CD4-positive, alpha-beta memory T cell (primary cell): ENCODE measurements at regions of chr19 and their contacts with region 1.

Region 1: DNA sequence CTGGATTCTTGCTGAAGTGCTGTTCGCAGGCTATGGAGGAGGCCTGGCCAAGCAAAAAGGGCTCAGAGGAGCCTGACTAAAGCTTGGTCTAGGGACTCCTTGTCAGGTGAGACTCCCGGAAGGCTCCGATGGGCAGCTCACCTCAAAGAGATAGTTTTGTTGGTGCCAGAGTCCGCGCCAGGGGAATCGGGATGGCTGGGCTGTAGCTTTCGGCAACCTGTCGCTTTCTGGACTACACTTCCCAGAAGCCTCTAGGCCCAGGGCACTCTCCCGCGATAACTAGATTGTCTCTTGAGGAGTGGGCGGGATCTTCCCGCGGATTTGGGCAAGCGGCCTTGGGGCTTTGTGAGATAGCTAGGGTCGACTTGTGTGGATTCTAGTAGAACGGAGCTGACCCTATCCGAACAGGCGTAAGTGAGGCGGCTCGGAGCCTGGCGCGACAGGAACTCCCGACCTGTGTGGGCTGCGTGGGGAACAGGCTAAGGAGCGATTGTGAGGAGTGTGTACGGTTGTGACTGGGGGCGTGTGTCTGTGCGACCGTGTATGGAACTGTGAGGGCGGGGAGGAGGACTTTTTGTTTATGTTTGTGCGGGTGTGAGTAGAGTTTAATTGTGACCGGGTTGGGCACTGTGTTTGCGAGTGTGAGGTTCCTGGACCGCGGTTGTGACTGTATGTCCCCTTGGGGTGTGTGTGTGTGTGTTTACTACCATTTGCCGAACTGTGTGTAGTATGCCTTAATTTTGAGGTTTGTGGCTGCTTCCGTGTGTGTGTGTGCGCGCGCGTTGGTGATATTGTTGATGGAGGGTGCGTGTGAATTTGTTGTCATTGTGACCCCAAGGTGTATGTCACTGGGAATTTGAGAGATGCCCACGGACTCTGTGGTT is at the start of gene ZNF345:
- DNase-seq: peak; percentile 87 to 94 (median 89)
- H3K4me3 ChIP-seq: peak within 1 kb of the TSS; percentile 88 to 97
- H3K4me3 Mint-ChIP-seq: no peak within 1 kb of the TSS
- H3K27ac ChIP-seq: peak within 1 kb of the TSS; percentile 86
- H3K27ac Mint-ChIP-seq: no peak within 1 kb of the TSS
- H3K4me1 ChIP-seq: peaks cover 29% of the 10 kb centered on the region
- H3K4me1 Mint-ChIP-seq: peaks cover 5 to 24% (median 11%) of the 10 kb centered on the region in 4 donors
- H3K27me3 ChIP-seq: no peaks in the 10 kb centered on the region
- H3K27me3 Mint-ChIP-seq: no peaks in the 10 kb centered on the region
- total RNA-seq, gene ZNF345: 17.6 to 18.0 TPM

Region 2: DNA sequence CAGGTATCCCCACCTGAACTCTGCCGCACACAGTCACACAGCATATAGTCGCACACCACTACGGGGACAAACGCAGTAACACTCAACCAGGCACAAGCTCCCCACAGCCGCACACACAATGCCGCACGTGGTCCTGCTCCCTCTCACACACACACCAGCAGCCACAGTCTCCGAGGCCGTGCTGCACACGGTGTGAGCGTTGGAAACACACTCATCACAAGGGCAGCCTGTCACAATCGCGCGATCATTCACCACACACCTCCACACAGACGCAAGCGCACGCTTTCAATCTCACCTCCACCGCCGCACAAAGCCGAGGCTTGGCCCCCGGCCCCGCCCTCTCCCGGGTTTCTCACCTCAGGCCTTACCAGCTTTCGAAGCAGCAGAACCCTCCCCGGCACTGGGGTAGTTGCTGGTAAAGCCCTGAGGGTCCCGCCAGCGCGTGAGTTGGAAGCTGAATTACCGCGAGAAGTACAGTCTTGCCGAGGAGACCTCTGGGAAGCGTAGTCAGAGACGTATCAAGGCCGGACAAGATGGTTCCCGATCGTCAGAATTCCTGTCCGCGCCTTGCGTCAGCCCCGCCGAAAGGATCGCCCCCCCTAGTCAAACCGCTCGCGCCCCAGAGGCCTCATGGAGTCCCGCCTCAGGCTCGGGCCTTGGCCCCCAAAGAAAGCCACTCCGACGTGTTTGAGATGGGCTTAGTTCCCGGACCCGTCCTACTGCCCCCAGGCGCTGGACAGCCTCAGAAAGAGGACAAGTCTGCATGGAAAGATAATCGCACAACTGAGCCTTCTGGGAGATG is 361.5 kb before region 1 on chr19 and contains the start of gene ZNF566:
- CTCF ChIA-PET with region 1: no interaction called
- POLR2A ChIA-PET with region 1: interaction called, 9 read pairs
- intact Hi-C with region 1: loop called (anchors 1 kb)
- DNase-seq: peak; percentile 94 to 98 (median 96)
- H3K4me3 ChIP-seq: peak within 1 kb of the TSS; percentile 92 to 99
- H3K4me3 Mint-ChIP-seq: peak within 1 kb of the TSS; percentile 97 to 100 (median 98)
- H3K27ac ChIP-seq: peak within 1 kb of the TSS; percentile 93
- H3K27ac Mint-ChIP-seq: peak within 1 kb of the TSS; percentile 98 to 99 (median 98)
- H3K4me1 ChIP-seq: peaks cover 24% of the 10 kb centered on the region
- H3K4me1 Mint-ChIP-seq: peaks cover 22 to 36% (median 28%) of the 10 kb centered on the region in 4 donors
- H3K27me3 ChIP-seq: no peaks in the 10 kb centered on the region
- H3K27me3 Mint-ChIP-seq: no peaks in the 10 kb centered on the region
- total RNA-seq, gene ZNF566: 25.9 to 30.6 TPM

Region 3: DNA sequence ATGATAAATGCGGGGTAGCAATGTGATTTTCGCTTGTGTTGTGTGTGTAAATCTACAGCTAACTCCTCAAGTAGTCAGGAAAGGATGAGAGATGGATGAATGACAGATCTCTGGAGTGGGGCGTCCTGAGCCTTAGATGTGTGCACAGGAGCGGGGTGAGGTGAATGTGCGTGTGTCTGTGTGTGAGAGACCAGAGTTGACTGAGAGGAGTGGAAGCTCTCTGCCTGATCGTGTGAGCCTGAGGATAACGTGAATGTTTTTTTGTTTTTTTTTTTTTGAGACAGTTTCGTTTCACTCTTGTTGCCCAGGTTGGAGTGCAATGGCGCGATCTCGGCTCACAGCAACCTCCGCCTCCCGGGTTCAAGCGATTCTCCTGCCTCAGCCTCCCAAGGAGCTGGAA is 185.0 kb before region 1 on chr19:
- CTCF ChIA-PET with region 1: no interaction called
- POLR2A ChIA-PET with region 1: interaction called, 4 read pairs
- intact Hi-C with region 1: loop called (anchors 2 kb)
- DNase-seq: no peak
- H3K4me3 ChIP-seq: peak overlapping the region; percentile 76 to 100
- H3K4me3 Mint-ChIP-seq: peak overlapping the region; percentile 94 to 100 (median 99)
- H3K27ac ChIP-seq: peak overlapping the region; percentile 71
- H3K27ac Mint-ChIP-seq: peak overlapping the region in 6 of 7 donors; percentile 5 to 99 (median 94)
- H3K4me1 ChIP-seq: peaks cover 28% of the 10 kb centered on the region
- H3K4me1 Mint-ChIP-seq: peaks cover 24 to 45% (median 31%) of the 10 kb centered on the region in 4 donors
- H3K27me3 ChIP-seq: no peaks in the 10 kb centered on the region
- H3K27me3 Mint-ChIP-seq: no peaks in the 10 kb centered on the region

Region 4: DNA sequence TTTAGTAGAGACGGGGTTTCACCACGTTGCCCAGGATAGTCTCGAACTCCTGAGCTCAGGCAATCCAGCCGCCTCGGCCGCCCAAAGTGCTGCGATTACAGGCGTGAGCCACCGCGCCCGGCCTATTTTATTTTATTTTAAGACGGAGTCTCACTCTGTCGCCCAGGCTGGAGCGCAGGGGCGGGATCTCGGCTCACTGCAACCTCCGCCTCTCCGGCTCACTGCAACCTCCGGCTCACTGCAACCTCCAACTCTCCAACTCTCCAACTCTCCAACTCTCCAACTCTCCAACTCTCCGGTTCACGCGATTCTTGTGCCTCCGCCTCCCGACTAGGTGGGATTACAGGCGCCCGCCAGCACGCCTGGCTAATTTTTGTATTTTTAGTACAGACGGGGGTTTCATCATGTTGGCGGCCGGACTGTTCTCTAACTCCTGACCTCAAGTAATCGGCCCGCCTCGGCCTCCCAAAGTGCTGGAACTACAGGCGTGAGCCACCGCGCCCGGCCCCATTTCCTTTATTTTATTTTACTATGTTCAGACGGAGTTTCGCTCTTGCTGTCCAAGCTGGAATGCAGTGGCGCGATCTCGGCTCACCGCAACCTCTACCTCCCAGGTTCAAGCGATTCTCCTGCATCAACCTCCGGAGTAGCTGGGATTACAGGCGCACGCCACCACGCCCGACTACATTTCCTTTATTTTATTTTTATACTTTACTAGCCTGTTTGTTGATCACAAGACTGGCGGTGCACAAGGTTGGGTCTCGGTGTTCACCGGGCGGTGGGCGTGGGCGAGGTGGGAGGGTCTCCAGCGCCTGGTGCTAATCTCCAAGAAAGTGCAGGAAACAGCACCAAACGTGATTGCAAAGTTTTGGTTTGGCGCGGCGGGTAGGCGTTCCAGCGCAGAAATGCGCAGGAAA is 54.5 kb before region 1 on chr19:
- CTCF ChIA-PET with region 1: no interaction called
- POLR2A ChIA-PET with region 1: interaction called, 17 read pairs
- intact Hi-C with region 1: loop called (anchors 1 kb)
- DNase-seq: no peak
- H3K4me3 ChIP-seq: peak overlapping the region; percentile 94 to 96
- H3K4me3 Mint-ChIP-seq: peak overlapping the region; percentile 99 to 100 (median 99)
- H3K27ac ChIP-seq: peak overlapping the region; percentile 79
- H3K27ac Mint-ChIP-seq: peak overlapping the region; percentile 99 to 100 (median 100)
- H3K4me1 ChIP-seq: peaks cover 4% of the 10 kb centered on the region
- H3K4me1 Mint-ChIP-seq: peaks cover 5 to 35% (median 21%) of the 10 kb centered on the region in 4 donors
- H3K27me3 ChIP-seq: no peaks in the 10 kb centered on the region
- H3K27me3 Mint-ChIP-seq: peaks cover 0 to 6% of the 10 kb centered on the region in 2 donors

Region 5: DNA sequence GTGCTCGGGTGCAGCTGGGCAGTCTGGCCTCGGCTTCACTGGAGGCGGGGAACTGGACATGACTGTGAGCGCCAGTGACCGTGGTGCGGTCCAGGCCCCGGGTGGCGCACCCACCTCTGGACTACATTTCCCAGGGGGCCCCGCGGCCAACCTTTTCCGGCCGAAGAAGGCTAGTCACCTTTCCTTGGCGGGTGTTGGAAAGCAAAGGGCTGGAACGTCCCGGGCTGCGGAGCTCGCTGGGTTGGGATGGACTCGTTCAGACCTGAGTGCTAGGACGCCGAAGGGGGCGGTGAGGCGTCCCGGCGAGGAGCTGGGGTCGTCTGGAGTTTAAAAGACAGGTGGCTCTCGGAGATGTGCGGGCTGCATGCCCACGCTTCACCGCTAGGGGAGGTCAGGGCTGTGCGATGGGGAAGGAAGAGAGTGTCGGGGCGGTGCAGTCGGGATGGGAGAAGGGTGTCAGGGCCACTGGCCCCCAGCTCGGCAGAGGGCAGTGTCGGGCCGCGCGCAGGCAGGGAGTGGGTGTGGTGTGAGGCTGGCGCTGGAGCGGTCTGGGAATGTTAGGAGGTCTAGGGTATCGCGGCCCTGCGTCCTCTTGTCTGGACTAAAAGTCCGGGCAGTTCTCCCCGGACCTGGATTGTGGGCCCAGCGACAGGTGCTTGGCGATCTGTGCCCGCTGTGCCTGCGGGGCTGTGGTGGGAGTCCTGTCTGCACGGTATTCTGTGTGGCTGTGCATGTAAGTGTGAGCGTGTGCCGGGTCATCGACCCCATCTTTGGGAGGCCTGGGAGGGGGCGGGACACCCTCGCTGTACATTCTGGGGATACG is 122.4 kb after region 1 on chr19:
- CTCF ChIA-PET with region 1: no interaction called
- POLR2A ChIA-PET with region 1: interaction called, 7 read pairs
- intact Hi-C with region 1: loop called (anchors 1 kb)
- DNase-seq: peak; percentile 76 to 85 (median 77)
- H3K4me3 ChIP-seq: peak overlapping the region; percentile 80 to 86
- H3K4me3 Mint-ChIP-seq: peak overlapping the region; percentile 91 to 98 (median 96)
- H3K27ac ChIP-seq: peak overlapping the region; percentile 68
- H3K27ac Mint-ChIP-seq: peak overlapping the region; percentile 82 to 97 (median 94)
- H3K4me1 ChIP-seq: peaks cover 16% of the 10 kb centered on the region
- H3K4me1 Mint-ChIP-seq: peaks cover 8 to 22% (median 12%) of the 10 kb centered on the region in 4 donors
- H3K27me3 ChIP-seq: no peaks in the 10 kb centered on the region
- H3K27me3 Mint-ChIP-seq: no peaks in the 10 kb centered on the region

Region 6: DNA sequence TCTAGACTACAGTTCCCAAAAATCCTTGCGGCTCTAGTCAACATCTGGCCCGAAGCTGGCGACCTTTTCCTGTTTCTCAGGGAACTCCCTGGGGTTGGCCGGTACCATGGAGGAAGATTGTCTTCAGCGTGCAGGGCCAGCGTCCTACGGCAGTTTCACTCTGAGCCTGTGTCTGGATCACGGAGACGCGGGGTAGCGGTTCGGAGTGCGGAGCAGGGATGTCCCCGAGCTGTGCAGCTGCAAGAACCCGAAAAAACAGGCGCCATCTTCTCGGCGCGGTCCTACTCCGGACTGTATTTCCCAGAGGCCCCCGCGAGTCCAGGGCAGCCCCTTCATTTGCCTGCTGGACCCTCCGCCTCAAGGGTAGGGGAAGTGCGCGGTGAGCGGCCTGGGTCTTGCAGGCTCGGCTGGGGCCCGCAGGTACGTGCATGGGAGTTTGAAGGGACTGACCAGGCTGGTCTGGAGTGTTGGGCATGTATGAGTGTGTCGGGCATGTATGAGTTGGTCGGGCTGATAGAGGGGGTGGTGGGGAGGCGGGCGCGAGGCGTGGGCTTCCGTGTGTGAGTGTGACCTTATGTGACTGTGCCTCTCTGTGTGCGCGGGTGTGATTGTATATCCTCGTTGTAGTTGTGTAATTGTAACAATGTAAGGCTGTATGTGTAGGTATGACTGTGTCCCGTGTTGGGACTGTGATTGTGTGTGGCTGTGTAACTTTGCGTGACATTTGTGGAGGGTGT is 367.2 kb after region 1 on chr19 and contains the start of gene ZNF383:
- CTCF ChIA-PET with region 1: no interaction called
- POLR2A ChIA-PET with region 1: interaction called, 15 read pairs
- intact Hi-C with region 1: no loop called
- DNase-seq: peak; percentile 80 to 87 (median 83)
- H3K4me3 ChIP-seq: peak within 1 kb of the TSS; percentile 85 to 99
- H3K4me3 Mint-ChIP-seq: peak within 1 kb of the TSS; percentile 89 to 98 (median 91)
- H3K27ac ChIP-seq: peak within 1 kb of the TSS; percentile 80
- H3K27ac Mint-ChIP-seq: peak within 1 kb of the TSS; percentile 88 to 98 (median 96)
- H3K4me1 ChIP-seq: peaks cover 16% of the 10 kb centered on the region
- H3K4me1 Mint-ChIP-seq: peaks cover 19 to 40% (median 31%) of the 10 kb centered on the region in 4 donors
- H3K27me3 ChIP-seq: no peaks in the 10 kb centered on the region
- H3K27me3 Mint-ChIP-seq: no peaks in the 10 kb centered on the region
- total RNA-seq, gene ZNF383: 32.0 to 34.0 TPM

Region 7: DNA sequence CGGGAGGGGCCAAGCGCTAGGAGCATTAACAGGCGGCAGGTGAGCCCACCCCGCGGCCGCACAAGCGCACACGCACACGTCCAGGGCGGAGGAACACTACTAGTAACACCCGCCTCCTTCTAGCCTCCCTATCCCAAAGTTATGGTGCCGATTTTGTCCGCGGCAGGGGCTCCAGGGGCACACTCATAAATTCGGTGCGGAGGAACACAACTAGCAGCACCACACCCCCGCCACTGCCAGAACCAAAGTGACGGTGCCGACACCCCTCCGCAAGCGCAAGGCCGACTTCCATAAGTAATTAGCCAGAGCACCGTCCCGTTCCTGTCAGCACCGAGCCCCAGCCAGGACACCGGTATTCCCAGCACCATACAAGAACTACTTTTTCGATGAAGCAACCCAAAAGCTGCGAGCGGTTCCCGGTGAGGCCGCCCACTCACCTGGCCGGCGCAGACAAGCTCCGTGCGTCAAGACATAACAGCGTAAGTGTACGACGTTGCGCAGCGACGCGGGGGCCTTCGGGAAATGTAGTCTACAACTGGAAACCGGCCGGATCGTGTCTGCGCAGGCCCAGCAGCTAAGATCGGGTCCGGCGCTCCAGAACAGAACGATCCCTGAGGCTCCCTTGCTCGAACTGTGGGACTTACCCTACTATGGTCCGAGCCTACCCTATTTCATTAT is 743.6 kb after region 1 on chr19 and contains the starts of genes ZNF540 and ZNF571:
- CTCF ChIA-PET with region 1: no interaction called
- POLR2A ChIA-PET with region 1: interaction called, 12 read pairs
- intact Hi-C with region 1: no loop called
- DNase-seq: peak; percentile 88 to 96 (median 92)
- H3K4me3 ChIP-seq: peak within 1 kb of the TSS; percentile 91 to 92
- H3K4me3 Mint-ChIP-seq: peak within 1 kb of the TSS; percentile 94 to 99 (median 97)
- H3K27ac ChIP-seq: peak within 1 kb of the TSS; percentile 98
- H3K27ac Mint-ChIP-seq: peak within 1 kb of the TSS; percentile 97 to 99 (median 99)
- H3K4me1 ChIP-seq: peaks cover 24% of the 10 kb centered on the region
- H3K4me1 Mint-ChIP-seq: peaks cover 21 to 47% (median 30%) of the 10 kb centered on the region in 4 donors
- H3K27me3 ChIP-seq: no peaks in the 10 kb centered on the region
- H3K27me3 Mint-ChIP-seq: no peaks in the 10 kb centered on the region
- total RNA-seq, gene ZNF540: 24.2 to 24.5 TPM
- total RNA-seq, gene ZNF571: 10.1 to 14.2 TPM